ENCODE measurements at regions of chr4 and their contacts with region 1.

Region 1: GRCh38 chr4:153296040-153296823 is 48.3 kb upstream of the MND1 start:
- DNase-seq: peak in 1 of 5 donors; percentile 28
- ATAC-seq: peak in 1 of 4 donors; percentile 34
- H3K4me3 ChIP-seq: no peak overlapping the region
- H3K27ac ChIP-seq: no peak overlapping the region
- H3K4me1 ChIP-seq: peaks cover 0 to 32% (median 11%) of the 10 kb centered on the region in 12 donors
- H3K27me3 ChIP-seq: no peaks in the 10 kb centered on the region
- CTCF ChIP-seq: no peak
- POLR2A ChIP-seq: no peak

Region 2: GRCh38 chr4:153249199-153250041 is 46.8 kb before region 1 on chr4:
- intact Hi-C with region 1: loop called in 1 of 10 experiments (anchors 10 kb)
- DNase-seq: peak; percentile 76 to 89 (median 76)
- ATAC-seq: peak; percentile 86 to 98 (median 96)
- H3K4me3 ChIP-seq: peak overlapping the region; percentile 13 to 70 (median 61)
- H3K27ac ChIP-seq: peak overlapping the region in 10 of 12 donors; percentile 9 to 79 (median 60)
- H3K4me1 ChIP-seq: peaks cover 0 to 51% (median 14%) of the 10 kb centered on the region in 12 donors
- H3K27me3 ChIP-seq: no peaks in the 10 kb centered on the region
- CTCF ChIP-seq: no peak
- POLR2A ChIP-seq: peak in 1 of 2 donors; percentile 24

Region 3: DNA sequence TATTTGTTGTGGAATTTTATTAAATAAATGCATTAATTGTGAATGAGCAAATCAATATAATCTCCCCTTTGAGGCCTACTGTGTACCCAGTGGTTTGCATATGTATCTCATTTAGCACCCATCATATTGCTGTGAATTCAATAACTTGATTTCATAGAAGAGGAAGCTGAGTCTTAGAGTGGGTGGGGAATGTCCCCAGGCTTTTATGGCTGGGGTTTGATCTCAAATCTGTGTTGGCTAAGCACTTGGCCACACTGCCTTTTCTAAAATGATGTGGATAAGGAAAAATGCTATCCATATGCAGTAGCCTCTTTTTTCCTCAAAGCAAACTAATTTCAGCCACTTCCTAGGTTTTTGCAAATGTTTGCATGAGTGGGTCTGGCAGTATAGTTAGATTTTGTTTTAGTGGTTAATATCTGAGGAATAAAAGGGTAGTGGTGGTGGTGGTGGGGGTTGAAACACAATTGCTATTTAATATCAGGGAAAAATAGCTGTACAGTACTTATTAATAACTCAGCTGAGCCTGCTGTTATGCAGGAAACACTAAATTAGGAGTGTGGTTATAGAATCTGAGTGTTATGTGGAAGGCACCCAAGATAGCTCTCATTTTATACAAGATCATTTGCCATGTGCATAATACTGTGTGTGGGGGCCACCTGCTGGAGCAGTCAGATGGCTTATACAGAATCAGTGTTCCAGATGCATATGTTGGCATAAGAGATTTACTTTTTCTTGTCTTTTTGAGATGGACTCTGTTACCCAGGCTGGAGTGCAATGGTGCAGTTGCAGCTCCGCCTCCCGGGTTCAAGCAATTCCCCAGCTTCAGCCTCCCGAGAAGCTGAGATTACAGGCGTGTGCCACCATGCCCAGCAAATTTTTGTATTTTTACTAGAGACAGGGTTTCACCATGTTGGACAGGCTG is 277.9 kb after region 1 on chr4:
- intact Hi-C with region 1: no loop called
- DNase-seq: peak; percentile 61 to 76 (median 65)
- ATAC-seq: peak; percentile 81 to 88 (median 84)
- H3K4me3 ChIP-seq: no peak overlapping the region
- H3K27ac ChIP-seq: peak overlapping the region in 11 of 12 donors; percentile 46 to 81 (median 71)
- H3K4me1 ChIP-seq: peaks cover 4 to 51% (median 23%) of the 10 kb centered on the region in 12 donors
- H3K27me3 ChIP-seq: no peaks in the 10 kb centered on the region
- CTCF ChIP-seq: peak; percentile 47 to 84 (median 66)
- POLR2A ChIP-seq: no peak